Naive thymus-derived CD4-positive, alpha-beta T cell (primary cell): ENCODE measurements at regions of chr6 and their contacts with region 1.

Region 1: DNA sequence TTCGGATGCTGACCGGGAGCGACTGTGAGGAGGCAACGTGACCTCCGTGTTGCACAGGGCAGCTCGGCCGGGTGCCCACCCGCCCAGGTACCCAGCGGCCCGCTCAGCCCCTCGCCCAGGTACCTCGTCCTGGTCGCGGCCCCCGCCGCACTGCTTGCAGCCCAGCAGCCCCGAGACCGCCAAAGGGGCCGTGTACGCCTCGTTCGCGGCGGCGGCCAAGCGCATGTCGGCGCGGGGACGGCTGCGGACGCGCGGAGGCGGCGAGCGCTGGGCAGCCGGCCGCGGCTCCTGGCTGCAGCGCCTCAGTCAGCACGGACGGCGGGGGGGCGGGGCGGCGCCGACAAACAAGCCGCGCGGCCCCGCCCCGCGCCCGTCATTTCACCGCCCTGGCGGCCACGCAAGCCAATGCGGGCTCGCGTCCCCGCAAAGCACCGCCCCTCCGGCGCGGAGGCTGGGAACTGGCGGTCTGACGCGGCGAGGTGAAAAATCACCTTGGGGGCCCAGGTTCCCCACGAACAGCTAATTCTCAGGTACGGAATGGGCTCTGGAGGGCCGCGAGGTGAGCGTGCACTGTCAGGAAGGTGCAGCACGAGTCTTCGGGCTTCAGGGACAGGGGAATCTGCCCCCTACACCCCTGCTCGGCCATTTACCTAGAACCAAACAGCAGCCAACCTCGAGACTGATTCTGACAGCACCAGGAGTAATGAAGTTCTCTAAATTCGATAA is 85.2 kb downstream of the SESN1 start:
- DNase-seq: peak; percentile 85 to 91 (median 90)
- ATAC-seq: peak; percentile 98
- H3K4me3 ChIP-seq: peak overlapping the region; percentile 84
- H3K4me3 Mint-ChIP-seq: peak overlapping the region; percentile 91 to 99 (median 96)
- H3K27ac ChIP-seq: peak overlapping the region; percentile 99
- H3K27ac Mint-ChIP-seq: peak overlapping the region; percentile 94 to 100 (median 98)
- H3K4me1 ChIP-seq: peaks cover 22 to 40% of the 10 kb centered on the region in 2 donors
- H3K4me1 Mint-ChIP-seq: peaks cover 26 to 81% (median 72%) of the 10 kb centered on the region in 7 donors
- H3K27me3 ChIP-seq: no peaks in the 10 kb centered on the region
- H3K27me3 Mint-ChIP-seq: peaks cover 0 to 3% (median 0%) of the 10 kb centered on the region in 5 donors

Region 2: DNA sequence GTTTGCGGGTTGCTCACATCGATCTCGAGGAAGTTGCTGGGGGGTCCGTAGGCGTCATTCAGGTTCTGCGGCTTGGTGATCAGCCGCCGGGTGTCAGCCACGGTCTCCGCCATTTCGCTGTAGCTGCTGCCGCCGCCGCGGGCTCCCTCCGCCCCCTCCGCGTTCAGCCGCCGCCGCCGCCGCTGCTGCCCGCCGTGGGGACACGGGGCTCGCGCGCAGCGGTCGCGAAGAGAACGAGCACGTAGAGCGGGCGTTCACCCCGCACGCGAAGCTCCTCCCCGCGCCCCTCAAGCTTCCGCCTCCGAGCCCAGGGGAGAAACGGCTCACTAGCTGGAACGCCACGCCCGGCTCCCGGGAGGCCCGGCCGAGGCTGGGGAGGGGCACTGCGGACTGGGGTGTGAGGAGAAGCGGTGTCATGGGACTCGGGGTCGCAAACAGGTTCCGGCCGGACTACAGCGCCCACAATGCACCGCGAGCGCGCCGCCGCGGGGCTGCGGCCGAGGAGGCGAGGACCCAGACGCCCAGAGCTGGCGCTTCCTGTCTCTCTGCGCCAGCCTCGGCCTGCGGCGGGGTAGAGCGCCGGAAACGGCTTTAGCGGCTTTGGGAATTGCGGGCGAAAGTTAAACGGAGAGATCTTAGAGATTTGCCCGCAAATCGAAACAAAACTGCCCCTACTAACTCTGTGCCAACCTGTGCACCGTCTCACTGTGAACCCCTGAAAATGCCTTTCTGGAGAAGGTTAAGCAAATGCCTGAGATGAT is 748.4 kb before region 1 on chr6 and contains the start of gene SNX3:
- CTCF ChIA-PET with region 1: no interaction called
- POLR2A ChIA-PET with region 1: interaction called, 6 read pairs
- intact Hi-C with region 1: loop called in 1 of 2 experiments (anchors 2 kb)
- DNase-seq: peak; percentile 81 to 92 (median 91)
- ATAC-seq: peak; percentile 92
- H3K4me3 ChIP-seq: peak within 1 kb of the TSS; percentile 76
- H3K4me3 Mint-ChIP-seq: peak within 1 kb of the TSS; percentile 78 to 97 (median 91)
- H3K27ac ChIP-seq: peak within 1 kb of the TSS; percentile 96
- H3K27ac Mint-ChIP-seq: peak within 1 kb of the TSS; percentile 85 to 98 (median 96)
- H3K4me1 ChIP-seq: peaks cover 0 to 8% of the 10 kb centered on the region in 2 donors
- H3K4me1 Mint-ChIP-seq: peaks cover 16 to 40% (median 26%) of the 10 kb centered on the region in 7 donors
- H3K27me3 ChIP-seq: no peaks in the 10 kb centered on the region
- H3K27me3 Mint-ChIP-seq: peaks cover 0 to 14% (median 0%) of the 10 kb centered on the region in 5 donors
- total RNA-seq, gene SNX3: 42.5 to 87.4 (median 65.8) TPM

Region 3: DNA sequence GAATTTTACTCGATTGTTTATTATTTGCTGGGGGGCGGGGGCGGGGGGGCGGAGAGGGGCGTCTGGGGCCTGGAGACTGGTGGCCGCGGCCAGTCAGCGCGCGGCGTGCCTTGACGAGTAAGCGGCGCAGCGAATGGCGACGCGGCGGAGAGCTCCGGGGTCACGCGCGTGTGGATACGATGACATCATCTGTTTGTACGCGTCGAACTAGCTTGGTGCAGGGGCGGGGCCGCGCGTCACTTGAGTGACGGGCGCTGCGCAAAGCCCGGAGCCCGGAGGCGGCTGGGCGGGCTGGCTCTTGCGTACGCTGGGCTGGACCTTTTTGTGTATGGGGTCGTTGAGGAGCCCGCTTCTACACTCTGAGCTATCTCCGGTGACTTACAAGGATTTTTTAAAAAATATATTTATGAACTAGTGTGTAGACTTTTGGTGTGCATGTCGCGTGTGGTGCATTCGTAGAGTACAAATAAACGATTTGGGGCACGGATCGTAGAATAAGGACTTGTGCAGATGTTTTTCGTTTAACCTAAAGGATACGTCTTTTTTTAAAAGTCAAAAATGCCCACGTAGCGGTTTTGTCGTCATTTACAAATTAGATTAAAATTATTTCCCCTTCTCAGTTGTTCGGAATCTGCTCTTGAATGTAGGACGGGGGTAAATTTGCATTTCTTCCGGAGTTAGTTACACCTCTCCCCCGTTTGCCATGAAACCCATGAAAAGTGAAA is 450.9 kb before region 1 on chr6:
- CTCF ChIA-PET with region 1: no interaction called
- POLR2A ChIA-PET with region 1: interaction called, 17 read pairs
- intact Hi-C with region 1: loop called (anchors 1 to 2 kb)
- DNase-seq: peak; percentile 91 to 98 (median 97)
- ATAC-seq: peak; percentile 75
- H3K4me3 ChIP-seq: peak overlapping the region; percentile 75
- H3K4me3 Mint-ChIP-seq: peak overlapping the region; percentile 88 to 98 (median 97)
- H3K27ac ChIP-seq: peak overlapping the region; percentile 100
- H3K27ac Mint-ChIP-seq: peak overlapping the region; percentile 87 to 99 (median 97)
- H3K4me1 ChIP-seq: peaks cover 12 to 13% of the 10 kb centered on the region in 2 donors
- H3K4me1 Mint-ChIP-seq: peaks cover 16 to 28% (median 20%) of the 10 kb centered on the region in 7 donors
- H3K27me3 ChIP-seq: no peaks in the 10 kb centered on the region
- H3K27me3 Mint-ChIP-seq: peaks cover 0 to 55% (median 6%) of the 10 kb centered on the region in 5 donors

Region 4: DNA sequence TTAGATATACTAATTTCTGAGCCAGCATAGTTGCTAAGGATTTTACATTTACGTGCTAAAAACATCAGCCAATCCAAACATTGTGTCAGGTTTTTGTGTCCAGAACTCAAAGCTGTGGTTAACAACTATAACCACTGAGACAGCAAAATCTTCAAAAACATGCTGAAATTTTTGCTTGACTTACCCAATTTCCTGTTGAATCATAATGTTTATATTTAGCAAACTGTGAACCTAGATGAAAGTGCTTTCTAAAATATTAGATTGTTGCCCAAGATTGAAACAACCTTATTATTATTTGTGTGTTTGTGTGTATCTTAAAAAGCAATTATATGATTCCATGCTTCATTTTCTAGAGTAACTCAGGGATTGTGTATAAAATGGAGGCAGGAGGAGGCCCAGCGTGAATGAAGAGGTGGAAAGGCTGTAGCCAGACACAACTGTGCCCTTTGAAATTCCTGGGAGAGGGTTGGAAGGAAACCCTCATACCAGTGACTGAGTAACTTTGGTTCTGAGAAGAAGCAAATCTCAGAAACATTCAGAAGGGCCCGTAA is 113.2 kb before region 1 on chr6:
- CTCF ChIA-PET with region 1: no interaction called
- POLR2A ChIA-PET with region 1: no interaction called
- intact Hi-C with region 1: loop called in 1 of 2 experiments (anchors 5 kb)
- DNase-seq: no peak
- ATAC-seq: peak; percentile 83
- H3K4me3 ChIP-seq: no peak overlapping the region
- H3K4me3 Mint-ChIP-seq: peak overlapping the region in 2 of 10 donors; percentile 48 to 76
- H3K27ac ChIP-seq: no peak overlapping the region
- H3K27ac Mint-ChIP-seq: peak overlapping the region in 2 of 9 donors; percentile 16 to 88
- H3K4me1 ChIP-seq: peaks cover 0 to 44% of the 10 kb centered on the region in 2 donors
- H3K4me1 Mint-ChIP-seq: peaks cover 11 to 37% (median 16%) of the 10 kb centered on the region in 7 donors
- H3K27me3 ChIP-seq: no peaks in the 10 kb centered on the region
- H3K27me3 Mint-ChIP-seq: peaks cover 0 to 20% (median 0%) of the 10 kb centered on the region in 5 donors

Region 5: DNA sequence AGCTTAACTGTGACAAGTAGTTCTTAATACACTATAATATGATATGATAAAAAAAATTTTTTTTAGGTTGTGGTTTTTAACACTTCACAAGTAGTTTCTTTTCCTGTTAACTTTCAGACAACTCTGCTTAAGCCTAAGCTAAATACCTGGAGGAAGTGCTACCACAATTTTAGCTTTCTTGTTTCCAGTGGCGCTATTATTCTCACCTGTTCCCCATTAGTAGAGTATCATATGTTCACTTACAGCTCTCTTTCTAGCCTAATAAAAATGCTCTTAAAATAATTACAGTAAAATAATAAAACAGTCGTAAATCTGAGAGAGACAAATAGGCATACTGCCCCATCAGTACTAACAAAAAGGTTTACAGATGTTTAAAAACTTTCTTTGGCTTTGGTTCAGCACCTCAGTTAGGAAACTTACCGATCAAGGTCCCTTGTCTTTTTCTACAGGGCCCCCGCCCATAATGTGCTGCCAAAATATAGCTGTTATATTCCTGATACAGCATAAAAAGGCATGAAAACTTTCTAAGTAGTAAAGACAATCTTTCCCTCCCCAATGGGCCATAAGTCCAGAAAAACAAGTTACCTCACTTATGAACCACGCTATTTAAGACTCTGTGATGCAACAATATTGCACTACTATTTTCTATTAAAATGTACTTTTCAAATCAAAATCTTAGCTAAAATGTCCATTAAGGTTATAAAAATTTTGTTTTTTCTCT is 27.3 kb after region 1 on chr6:
- CTCF ChIA-PET with region 1: interaction called, 6 read pairs
- POLR2A ChIA-PET with region 1: interaction called, 15 read pairs
- intact Hi-C with region 1: loop called in 1 of 2 experiments (anchors 1 kb)
- DNase-seq: peak in 4 of 9 donors; percentile 27 to 35 (median 32)
- ATAC-seq: peak; percentile 89
- H3K4me3 ChIP-seq: no peak overlapping the region
- H3K4me3 Mint-ChIP-seq: peak overlapping the region in 8 of 10 donors; percentile 18 to 74 (median 59)
- H3K27ac ChIP-seq: peak overlapping the region; percentile 25
- H3K27ac Mint-ChIP-seq: peak overlapping the region in 8 of 9 donors; percentile 42 to 86 (median 64)
- H3K4me1 ChIP-seq: peaks cover 8 to 21% of the 10 kb centered on the region in 2 donors
- H3K4me1 Mint-ChIP-seq: peaks cover 6 to 74% (median 49%) of the 10 kb centered on the region in 7 donors
- H3K27me3 ChIP-seq: no peaks in the 10 kb centered on the region
- H3K27me3 Mint-ChIP-seq: peaks cover 0 to 31% (median 0%) of the 10 kb centered on the region in 5 donors

Region 6: GRCh38 chr6:109455502-109456282 is 446.3 kb after region 1 on chr6 and contains the start of gene MICAL1:
- CTCF ChIA-PET with region 1: no interaction called
- POLR2A ChIA-PET with region 1: no interaction called
- intact Hi-C with region 1: loop called in 1 of 2 experiments (anchors 5 kb)
- DNase-seq: peak; percentile 55 to 79 (median 72)
- ATAC-seq: peak; percentile 82
- H3K4me3 ChIP-seq: peak within 1 kb of the TSS; percentile 81
- H3K4me3 Mint-ChIP-seq: peak within 1 kb of the TSS; percentile 95 to 99 (median 97)
- H3K27ac ChIP-seq: peak within 1 kb of the TSS; percentile 94
- H3K27ac Mint-ChIP-seq: peak within 1 kb of the TSS; percentile 83 to 99 (median 97)
- H3K4me1 ChIP-seq: peaks cover 40 to 45% of the 10 kb centered on the region in 2 donors
- H3K4me1 Mint-ChIP-seq: peaks cover 29 to 68% (median 62%) of the 10 kb centered on the region in 7 donors
- H3K27me3 ChIP-seq: no peaks in the 10 kb centered on the region
- H3K27me3 Mint-ChIP-seq: no peaks in the 10 kb centered on the region
- total RNA-seq, gene MICAL1: 61.4 to 125 (median 78.7) TPM